Left ventricle myocardium inferior (tissue), 1 donor: ENCODE measurements at regions of chr4 and their contacts with region 1.

Region 1: GRCh38 chr4:118957722-118958445 is 69.2 kb downstream of the SYNPO2 start:
- DNase-seq: no peak
- H3K4me3 ChIP-seq: no peak overlapping the region
- H3K27ac ChIP-seq: peak overlapping the region; percentile 67
- H3K4me1 ChIP-seq: peaks cover 88% of the 10 kb centered on the region
- H3K27me3 ChIP-seq: no peaks in the 10 kb centered on the region
- CTCF ChIP-seq: no peak

Region 2: DNA sequence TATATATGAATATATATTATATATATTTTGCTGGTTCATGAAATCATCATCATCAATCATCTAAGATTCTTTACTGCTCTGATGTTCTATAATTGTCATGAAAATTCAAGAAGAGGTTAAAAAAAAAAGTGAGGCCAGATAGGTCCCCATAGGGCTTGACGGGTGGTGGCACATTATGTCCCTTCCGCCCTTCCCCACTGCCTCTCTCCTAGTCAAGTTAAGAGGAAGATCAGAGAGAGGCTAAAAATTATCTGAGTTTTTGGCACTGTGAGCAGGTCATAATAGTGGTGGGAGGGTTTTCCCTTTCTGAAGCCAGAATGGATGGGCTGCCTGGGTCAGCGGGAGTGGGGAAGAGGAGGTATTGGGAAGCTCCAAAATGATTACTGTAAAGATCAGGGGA is 63.9 kb before region 1 on chr4:
- intact Hi-C with region 1: loop called (anchors 5 kb)
- DNase-seq: no peak
- H3K4me3 ChIP-seq: peak overlapping the region; percentile 72
- H3K27ac ChIP-seq: peak overlapping the region; percentile 88
- H3K4me1 ChIP-seq: peaks cover 64% of the 10 kb centered on the region
- H3K27me3 ChIP-seq: no peaks in the 10 kb centered on the region
- CTCF ChIP-seq: no peak

Region 3: DNA sequence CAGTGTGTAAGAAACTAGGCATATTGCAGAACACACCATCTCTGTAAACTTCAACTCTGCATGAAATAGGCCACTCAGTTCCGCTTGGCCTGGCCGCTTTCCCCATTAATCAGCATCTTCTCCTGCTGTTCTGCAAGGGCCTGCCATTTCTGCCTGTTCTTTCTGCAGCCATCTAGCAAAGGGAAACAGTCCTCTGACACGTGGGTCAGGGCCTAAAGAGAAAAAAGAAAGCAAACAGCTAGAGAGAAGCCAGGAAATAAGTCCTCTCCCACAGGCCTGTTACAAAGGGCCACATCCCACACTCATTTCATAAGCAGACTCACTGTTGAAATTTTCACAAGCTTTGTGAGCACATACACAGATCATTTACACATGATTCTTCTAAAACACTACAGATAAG is 540.6 kb after region 1 on chr4:
- intact Hi-C with region 1: no loop called
- DNase-seq: peak; percentile 25
- H3K4me3 ChIP-seq: no peak overlapping the region
- H3K27ac ChIP-seq: peak overlapping the region; percentile 71
- H3K4me1 ChIP-seq: peaks cover 12% of the 10 kb centered on the region
- H3K27me3 ChIP-seq: no peaks in the 10 kb centered on the region
- CTCF ChIP-seq: no peak